ENCODE measurements at regions of chr5 and their contacts with region 1.

Region 1: DNA sequence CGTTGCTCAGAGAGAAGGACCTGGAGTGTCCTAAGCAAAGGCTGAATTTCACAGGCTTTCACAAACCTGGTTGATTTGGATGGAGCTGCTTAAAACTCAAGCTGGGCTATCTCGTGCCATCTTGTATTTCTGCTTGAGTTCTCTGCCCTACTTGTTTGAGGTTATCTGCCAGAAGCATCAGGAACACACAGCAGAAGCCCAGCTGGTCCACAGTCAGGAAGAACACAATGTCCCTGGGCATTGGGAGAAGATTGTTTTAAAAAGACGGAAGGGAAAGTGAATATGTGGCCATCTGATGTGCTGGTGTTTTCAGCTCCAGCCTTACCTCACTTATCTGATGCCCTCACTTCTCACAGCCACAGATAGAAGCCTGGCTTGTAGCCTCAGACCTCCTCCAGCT is 32.9 kb upstream of the SLC36A1 start:
- DNase-seq: no peak
- H3K4me3 ChIP-seq: no peak overlapping the region
- H3K27ac ChIP-seq: no peak overlapping the region
- H3K4me1 ChIP-seq: no peaks in the 10 kb centered on the region
- H3K27me3 ChIP-seq: no peaks in the 10 kb centered on the region
- CTCF ChIP-seq: no peak
- EP300 ChIP-seq: no peak
- POLR2A ChIP-seq: no peak
- RAD21 ChIP-seq: no peak

Region 2: GRCh38 chr5:151299704-151300103 is 114.8 kb before region 1 on chr5:
- CTCF ChIA-PET with region 1: no interaction called
- POLR2A ChIA-PET with region 1: no interaction called
- DNase-seq: no peak
- H3K4me3 ChIP-seq: no peak overlapping the region
- H3K27ac ChIP-seq: no peak overlapping the region
- H3K4me1 ChIP-seq: peaks cover 0 to 3% (median 0%) of the 10 kb centered on the region in 4 experiments; a peak in 1 of 7 replicates
- H3K27me3 ChIP-seq: no peaks in the 10 kb centered on the region
- CTCF ChIP-seq: no peak
- EP300 ChIP-seq: no peak
- POLR2A ChIP-seq: no peak
- RAD21 ChIP-seq: no peak

Region 3: GRCh38 chr5:151427258-151427657 is 12.7 kb after region 1 on chr5:
- CTCF ChIA-PET with region 1: interaction called, 10 read pairs
- POLR2A ChIA-PET with region 1: no interaction called
- DNase-seq: no peak
- H3K4me3 ChIP-seq: no peak overlapping the region
- H3K27ac ChIP-seq: no peak overlapping the region
- H3K4me1 ChIP-seq: peaks cover 2 to 5% (median 3%) of the 10 kb centered on the region in 4 experiments; a peak in 6 of 7 replicates
- H3K27me3 ChIP-seq: no peaks in the 10 kb centered on the region
- CTCF ChIP-seq: peak; percentile 7 to 12 (median 12); a peak in 2 of 4 replicates
- EP300 ChIP-seq: no peak
- POLR2A ChIP-seq: no peak
- RAD21 ChIP-seq: no peak; a peak in 1 of 4 replicates

Measured in H1 (cell line).